Activated CD4-positive, alpha-beta T cell treated with anti-CD3 and anti-CD28 coated beads, Interleukin-2, amount 10 ng/mL, durations not matched to agents 24 days and 14 days (primary cell): ENCODE measurements at regions of chr18 and their contacts with region 1.

Region 1: DNA sequence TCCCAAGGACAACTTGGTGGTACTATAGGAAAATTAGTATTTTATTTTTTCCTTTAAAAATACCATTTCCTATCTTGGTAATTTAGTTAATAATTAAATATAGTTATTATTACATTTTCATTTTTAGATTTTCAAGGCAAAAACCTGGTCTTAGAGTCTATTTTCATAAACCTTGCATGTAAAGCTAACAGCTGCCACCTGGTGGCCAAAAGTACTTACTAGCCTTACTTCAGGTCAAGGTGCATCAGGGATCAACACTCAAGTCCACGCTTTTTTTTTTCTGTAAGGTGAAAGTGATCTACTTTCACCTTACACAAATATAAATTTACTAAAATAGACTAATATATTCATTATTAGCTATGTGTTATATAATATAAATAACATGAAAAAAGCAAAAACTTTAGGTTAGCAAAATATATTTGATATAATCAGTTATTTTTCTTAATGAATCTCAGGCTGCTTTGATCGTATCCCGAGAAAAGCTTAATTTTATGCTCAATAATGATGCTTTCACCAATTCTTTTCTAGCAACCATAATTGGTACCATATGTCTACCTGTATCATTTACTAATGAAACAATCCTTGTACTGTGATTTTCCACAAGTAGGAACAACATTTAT is 62.5 kb downstream of the RELCH start:
- DNase-seq: peak; percentile 89
- H3K4me3 Mint-ChIP-seq: no peak overlapping the region
- H3K27ac Mint-ChIP-seq: no peak overlapping the region
- H3K4me1 Mint-ChIP-seq: no peaks in the 10 kb centered on the region
- H3K27me3 Mint-ChIP-seq: no peaks in the 10 kb centered on the region

Region 2: DNA sequence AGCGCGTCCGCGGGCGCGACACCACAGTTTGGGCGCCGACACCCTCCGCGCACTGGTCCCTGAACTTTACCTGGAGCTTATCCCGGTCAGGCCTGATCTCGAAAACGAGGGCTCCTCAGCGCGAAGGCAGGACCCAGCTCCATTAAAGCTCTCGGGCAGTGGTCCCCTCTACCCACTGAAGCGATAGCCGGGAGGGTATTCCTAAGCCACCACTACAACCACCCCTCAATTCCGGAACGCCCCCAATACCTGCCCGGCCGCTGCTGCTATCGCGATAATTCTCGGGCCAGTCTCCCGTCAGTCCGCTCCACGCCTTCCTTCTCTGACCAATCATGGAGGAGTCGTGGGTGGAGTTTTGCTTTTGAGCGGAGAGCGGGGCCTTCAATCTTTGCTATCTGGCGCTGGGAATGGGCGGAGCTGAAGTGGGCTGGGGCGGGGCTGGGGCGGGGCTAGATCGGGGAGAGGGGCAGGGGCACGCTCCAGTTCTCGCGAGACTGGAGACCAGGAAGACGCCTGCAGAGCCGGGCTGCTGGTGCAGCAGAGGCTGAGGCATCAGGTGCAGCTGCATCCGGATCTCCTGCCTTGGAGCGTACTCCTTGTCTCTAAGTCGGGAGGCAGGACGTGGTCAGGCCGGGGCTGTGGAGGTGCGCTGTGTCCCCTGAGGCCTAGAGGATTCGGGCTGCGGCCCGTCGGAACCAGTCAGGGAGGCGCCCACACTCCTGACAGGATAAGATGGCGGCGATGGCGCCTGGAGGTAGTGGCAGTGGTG is 62.6 kb before region 1 on chr18 and contains the starts of genes PIGN and RELCH:
- intact Hi-C with region 1: loop called (anchors 1 kb)
- DNase-seq: peak; percentile 98
- H3K4me3 Mint-ChIP-seq: peak within 1 kb of the TSS; percentile 100
- H3K27ac Mint-ChIP-seq: peak within 1 kb of the TSS; percentile 97
- H3K4me1 Mint-ChIP-seq: peaks cover 42% of the 10 kb centered on the region
- H3K27me3 Mint-ChIP-seq: no peaks in the 10 kb centered on the region
- total RNA-seq, gene PIGN: 32.0 and 33.9 TPM in 2 replicates
- total RNA-seq, gene RELCH: 30.6 and 31.1 TPM in 2 replicates